Activated CD4-positive, alpha-beta T cell treated with anti-CD3 and anti-CD28 coated beads for 36 hours (primary cell): ENCODE measurements at regions of chr11 and their contacts with region 1.

Region 1: DNA sequence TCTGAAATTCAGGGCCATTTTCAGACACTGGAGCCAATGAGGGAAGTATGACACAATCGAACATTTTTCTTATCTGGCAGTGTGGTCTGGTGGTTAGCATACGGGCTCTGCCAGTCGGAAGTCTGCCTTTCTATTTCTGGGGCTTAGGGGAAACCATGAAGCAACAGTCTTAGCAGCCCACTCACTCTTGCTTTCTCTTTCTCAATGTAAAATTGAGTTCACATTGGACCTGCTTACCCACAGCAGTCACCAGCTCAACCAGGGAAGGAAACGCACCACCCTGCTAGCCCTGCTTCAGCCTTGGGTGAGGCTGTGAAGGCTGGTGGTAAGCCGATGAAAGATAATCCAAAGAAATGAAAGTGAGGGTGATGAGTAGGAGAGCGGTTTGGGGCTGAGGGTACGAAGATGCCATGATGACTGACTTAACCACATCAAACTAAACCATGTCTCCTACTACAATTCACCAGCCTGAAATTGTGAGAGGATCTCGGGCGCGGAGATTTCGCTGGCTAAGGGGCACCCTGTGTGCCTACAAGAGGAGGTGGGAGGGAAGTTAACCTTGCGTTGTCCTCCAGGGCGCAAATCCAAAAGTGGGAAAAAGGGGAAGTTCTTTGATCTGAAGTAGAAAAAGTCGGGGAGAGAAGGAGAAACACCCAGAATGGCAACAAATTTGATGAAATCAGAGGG is 2.0 kb upstream of the LMO2 start:
- DNase-seq: peak; percentile 92
- ATAC-seq: peak; percentile 95
- H3K4me3 Mint-ChIP-seq: peak overlapping the region; percentile 1
- H3K27ac Mint-ChIP-seq: peak overlapping the region; percentile 10
- H3K4me1 Mint-ChIP-seq: peaks cover 36% of the 10 kb centered on the region
- H3K27me3 Mint-ChIP-seq: peaks cover 69% of the 10 kb centered on the region

Region 2: GRCh38 chr11:33015621-33016551 is 878.0 kb before region 1 on chr11 and contains the start of gene DEPDC7:
- CTCF ChIA-PET with region 1: no interaction called
- POLR2A ChIA-PET with region 1: no interaction called
- intact Hi-C with region 1: loop called in 1 of 2 experiments (anchors 1 kb)
- DNase-seq: peak; percentile 90
- ATAC-seq: peak; percentile 81
- H3K4me3 Mint-ChIP-seq: peak within 1 kb of the TSS; percentile 75
- H3K27ac Mint-ChIP-seq: peak within 1 kb of the TSS; percentile 37
- H3K4me1 Mint-ChIP-seq: peaks cover 43% of the 10 kb centered on the region
- H3K27me3 Mint-ChIP-seq: peaks cover 29% of the 10 kb centered on the region
- total RNA-seq, gene DEPDC7: 2.0 to 2.3 TPM

Region 3: DNA sequence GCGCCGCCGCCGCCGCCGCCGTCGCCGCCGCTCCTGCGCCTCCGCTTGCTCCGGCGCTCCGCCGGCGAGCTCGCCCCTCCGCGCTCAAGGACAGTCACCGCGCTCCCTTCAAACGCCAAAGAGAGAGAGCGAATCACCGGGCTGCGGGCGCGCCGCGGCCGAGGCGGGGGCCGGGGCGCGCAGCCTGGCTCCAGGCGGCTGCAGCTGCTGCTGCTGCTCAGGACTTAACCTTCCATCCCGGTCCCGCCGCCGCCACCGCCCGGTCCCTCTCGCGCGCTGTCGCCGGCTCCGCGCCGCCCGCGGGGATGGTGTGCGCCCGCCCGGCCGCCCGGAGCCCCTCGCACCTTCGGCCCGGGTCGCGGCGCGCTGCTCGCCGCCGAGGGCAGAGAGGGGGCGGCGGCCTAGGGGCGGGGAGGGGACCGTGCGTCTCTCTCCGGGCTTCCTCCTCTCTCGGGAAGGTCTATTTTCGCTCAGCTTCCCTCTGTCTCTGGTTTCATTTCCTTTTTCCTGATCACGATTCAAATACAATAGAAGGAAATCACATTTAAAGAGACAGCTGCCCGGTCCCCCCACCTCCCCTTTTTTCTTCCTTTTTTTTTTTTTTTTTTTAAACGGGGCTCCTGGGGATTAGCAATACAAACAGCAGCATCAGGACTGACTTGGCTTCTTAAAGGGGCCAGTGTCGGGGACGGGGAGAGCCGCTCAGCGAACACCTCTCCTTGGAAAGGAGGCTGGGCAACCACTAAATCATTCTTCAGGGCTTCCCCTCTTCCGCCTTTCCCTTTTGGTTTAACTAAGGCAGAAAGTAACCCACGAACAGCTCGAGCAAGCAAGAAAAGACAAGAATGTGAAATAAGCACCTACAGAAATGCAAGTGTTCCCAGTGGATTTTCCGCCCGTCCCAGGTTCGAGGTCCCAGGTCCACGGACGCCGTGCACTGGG is 24.1 kb before region 1 on chr11:
- CTCF ChIA-PET with region 1: no interaction called
- POLR2A ChIA-PET with region 1: interaction called, 3 read pairs
- intact Hi-C with region 1: loop called (anchors 1 to 2 kb)
- DNase-seq: peak; percentile 35
- ATAC-seq: peak; percentile 74
- H3K4me3 Mint-ChIP-seq: peak overlapping the region; percentile 63
- H3K27ac Mint-ChIP-seq: no peak overlapping the region
- H3K4me1 Mint-ChIP-seq: peaks cover 9% of the 10 kb centered on the region
- H3K27me3 Mint-ChIP-seq: peaks cover 62% of the 10 kb centered on the region

Region 4: DNA sequence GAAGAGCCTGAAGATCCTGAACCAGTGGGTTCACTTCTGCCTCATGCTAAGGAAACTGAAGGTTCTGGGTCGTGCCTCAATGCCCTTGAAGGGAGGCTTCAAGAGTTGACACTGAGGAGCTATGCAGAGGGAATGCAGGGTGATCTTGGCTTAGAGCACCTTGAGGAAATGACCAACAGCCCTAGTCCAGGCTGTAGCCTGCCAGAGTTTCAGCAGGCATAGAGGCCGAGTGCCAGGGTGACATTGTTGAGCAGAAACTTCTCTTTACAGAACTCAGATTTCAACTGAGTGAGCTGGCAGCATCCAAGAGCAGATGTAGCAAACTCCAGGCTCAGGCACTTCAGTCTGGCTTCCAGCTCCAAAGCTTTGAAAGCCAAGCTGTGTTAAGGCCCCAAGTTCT is 134.6 kb after region 1 on chr11:
- CTCF ChIA-PET with region 1: no interaction called
- POLR2A ChIA-PET with region 1: no interaction called
- intact Hi-C with region 1: no loop called
- DNase-seq: no peak
- ATAC-seq: no peak
- H3K4me3 Mint-ChIP-seq: no peak overlapping the region
- H3K27ac Mint-ChIP-seq: no peak overlapping the region
- H3K4me1 Mint-ChIP-seq: no peaks in the 10 kb centered on the region
- H3K27me3 Mint-ChIP-seq: no peaks in the 10 kb centered on the region

Region 5: DNA sequence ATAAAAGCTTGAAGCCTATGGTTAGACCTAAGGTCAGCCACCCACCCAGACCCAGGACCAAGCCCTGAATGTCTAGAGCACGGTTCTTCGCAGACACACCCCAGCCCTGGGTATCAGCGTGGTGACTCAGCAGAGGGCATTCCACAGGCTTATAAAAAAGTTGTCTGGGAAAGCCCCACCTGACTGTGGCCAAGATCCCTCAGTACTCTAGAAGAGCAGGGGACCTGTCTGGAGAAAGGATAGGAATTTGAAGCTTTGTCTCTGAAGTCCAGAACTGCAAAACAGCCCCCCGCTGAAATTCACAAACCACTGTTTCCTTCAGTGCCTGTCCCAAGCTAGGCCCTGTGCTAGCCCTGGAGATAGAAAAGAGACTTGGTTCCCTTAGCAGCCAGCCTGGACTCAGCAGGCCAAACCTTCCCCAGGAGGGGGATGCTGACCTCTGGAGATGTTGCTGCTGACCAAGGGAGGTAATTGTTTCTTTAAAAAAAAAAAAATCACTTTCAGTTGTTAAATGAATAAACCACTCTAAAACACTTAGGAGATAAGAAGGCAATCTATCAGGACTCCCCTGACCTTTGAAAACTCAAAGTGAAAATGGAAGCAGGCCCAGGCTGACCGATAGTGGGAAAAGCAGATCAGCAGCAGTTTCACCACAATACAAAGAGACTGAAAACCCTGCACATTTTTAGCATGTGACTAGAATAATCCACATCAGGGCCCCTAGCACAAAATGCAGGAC is 350.0 kb after region 1 on chr11:
- CTCF ChIA-PET with region 1: no interaction called
- POLR2A ChIA-PET with region 1: no interaction called
- intact Hi-C with region 1: loop called (anchors 2 to 5 kb)
- DNase-seq: peak; percentile 79
- ATAC-seq: peak; percentile 65
- H3K4me3 Mint-ChIP-seq: no peak overlapping the region
- H3K27ac Mint-ChIP-seq: no peak overlapping the region
- H3K4me1 Mint-ChIP-seq: peaks cover 88% of the 10 kb centered on the region
- H3K27me3 Mint-ChIP-seq: peaks cover 2% of the 10 kb centered on the region

Region 6: DNA sequence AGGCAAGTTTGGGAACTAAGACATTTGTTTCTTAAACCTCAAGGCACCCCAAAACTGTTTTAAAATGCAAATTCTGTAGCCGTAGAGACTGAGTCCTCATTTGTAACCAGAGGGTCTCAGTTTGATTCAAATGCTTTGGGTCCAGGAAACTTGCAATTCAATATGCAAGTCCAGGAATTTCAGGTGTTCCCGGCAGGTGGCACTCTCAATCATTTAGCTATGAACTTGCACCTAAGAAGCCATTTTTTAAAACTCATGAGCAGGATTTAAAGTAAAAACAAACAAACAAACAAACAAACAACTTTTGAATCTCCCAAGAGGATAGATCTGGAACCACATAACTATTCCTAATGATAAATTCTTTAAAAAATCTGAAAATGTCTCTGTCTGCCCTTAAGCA is 472.7 kb after region 1 on chr11:
- CTCF ChIA-PET with region 1: no interaction called
- POLR2A ChIA-PET with region 1: no interaction called
- intact Hi-C with region 1: loop called in 1 of 2 experiments (anchors 2 kb)
- DNase-seq: peak; percentile 46
- ATAC-seq: no peak
- H3K4me3 Mint-ChIP-seq: no peak overlapping the region
- H3K27ac Mint-ChIP-seq: no peak overlapping the region
- H3K4me1 Mint-ChIP-seq: peaks cover 13% of the 10 kb centered on the region
- H3K27me3 Mint-ChIP-seq: peaks cover 10% of the 10 kb centered on the region

Region 7: GRCh38 chr11:35013514-35014233 is 1119.8 kb after region 1 on chr11:
- CTCF ChIA-PET with region 1: no interaction called
- POLR2A ChIA-PET with region 1: interaction called, 10 read pairs
- intact Hi-C with region 1: no loop called
- DNase-seq: peak; percentile 54
- ATAC-seq: peak; percentile 75
- H3K4me3 Mint-ChIP-seq: peak overlapping the region; percentile 34
- H3K27ac Mint-ChIP-seq: peak overlapping the region; percentile 74
- H3K4me1 Mint-ChIP-seq: peaks cover 49% of the 10 kb centered on the region
- H3K27me3 Mint-ChIP-seq: peaks cover 2% of the 10 kb centered on the region